Mammary epithelial cell (primary cell): ENCODE measurements at regions of chr6 and their contacts with region 1.

Region 1: GRCh38 chr6:126504792-126505191 is 164.9 kb downstream of the CENPW start:
- DNase-seq: no peak
- H3K4me3 ChIP-seq: no peak overlapping the region
- H3K27ac ChIP-seq: no peak overlapping the region
- H3K4me1 ChIP-seq: no peaks in the 10 kb centered on the region
- H3K27me3 ChIP-seq: no peaks in the 10 kb centered on the region
- CTCF ChIP-seq: no peak

Region 2: DNA sequence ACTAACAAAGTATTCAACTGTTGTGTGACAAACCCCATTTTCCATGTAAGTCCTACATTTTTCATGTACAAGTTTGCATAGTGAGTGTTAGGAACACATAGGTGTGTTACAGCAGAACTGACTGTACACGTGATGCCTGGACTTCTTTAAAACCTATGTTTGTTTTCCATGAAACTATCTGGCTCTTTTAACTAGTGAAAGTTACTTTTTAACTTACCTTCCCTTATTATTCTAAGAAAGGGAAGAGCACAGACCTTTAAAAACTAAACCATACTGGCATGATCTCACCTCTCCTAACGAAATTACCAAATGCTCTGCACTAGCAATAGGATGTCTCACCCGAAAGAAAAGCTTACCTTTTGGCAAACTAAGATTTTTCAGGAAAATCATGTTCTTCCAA is 77.1 kb before region 1 on chr6:
- CTCF ChIA-PET with region 1: no interaction called
- dilution Hi-C with region 1: loop called (anchors 5 kb)
- in situ Hi-C with region 1: no loop called
- intact Hi-C with region 1: no loop called
- DNase-seq: no peak
- H3K4me3 ChIP-seq: no peak overlapping the region
- H3K27ac ChIP-seq: no peak overlapping the region
- H3K4me1 ChIP-seq: no peaks in the 10 kb centered on the region
- H3K27me3 ChIP-seq: no peaks in the 10 kb centered on the region
- CTCF ChIP-seq: no peak

Region 3: DNA sequence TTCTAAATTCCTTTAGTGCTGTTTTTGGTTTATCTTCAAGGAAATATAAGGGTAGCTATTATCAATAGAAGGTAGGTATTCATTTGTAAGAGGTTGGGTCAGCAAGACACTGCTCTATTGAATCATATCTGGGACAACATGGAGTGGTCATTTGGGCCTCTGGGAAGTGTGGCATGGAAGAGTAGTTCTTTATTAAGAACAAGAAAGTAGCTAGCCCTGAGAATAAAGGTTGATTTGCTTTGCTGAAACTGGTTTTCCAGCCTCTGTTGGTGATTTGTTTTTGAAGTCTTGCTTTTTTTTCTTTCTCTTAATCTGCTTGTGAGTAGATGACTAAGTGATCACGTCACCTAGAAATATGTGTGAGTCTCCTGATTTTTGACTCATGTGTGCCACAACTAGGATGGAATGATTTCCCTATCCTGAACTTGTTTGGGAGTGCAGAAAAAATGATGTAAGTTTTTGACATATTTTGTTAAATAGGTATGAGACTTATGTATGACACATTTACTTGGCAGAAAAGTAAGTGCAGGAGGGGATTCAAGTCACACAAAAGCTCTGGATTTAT is 216.9 kb after region 1 on chr6:
- CTCF ChIA-PET with region 1: no interaction called
- dilution Hi-C with region 1: no loop called
- in situ Hi-C with region 1: no loop called
- intact Hi-C with region 1: no loop called
- DNase-seq: peak; percentile 76
- H3K4me3 ChIP-seq: no peak overlapping the region
- H3K27ac ChIP-seq: peak overlapping the region; percentile 15
- H3K4me1 ChIP-seq: peaks cover 7% of the 10 kb centered on the region
- H3K27me3 ChIP-seq: no peaks in the 10 kb centered on the region
- CTCF ChIP-seq: no peak